ENCODE measurements at regions of chr10 and their contacts with region 1.

Region 1: DNA sequence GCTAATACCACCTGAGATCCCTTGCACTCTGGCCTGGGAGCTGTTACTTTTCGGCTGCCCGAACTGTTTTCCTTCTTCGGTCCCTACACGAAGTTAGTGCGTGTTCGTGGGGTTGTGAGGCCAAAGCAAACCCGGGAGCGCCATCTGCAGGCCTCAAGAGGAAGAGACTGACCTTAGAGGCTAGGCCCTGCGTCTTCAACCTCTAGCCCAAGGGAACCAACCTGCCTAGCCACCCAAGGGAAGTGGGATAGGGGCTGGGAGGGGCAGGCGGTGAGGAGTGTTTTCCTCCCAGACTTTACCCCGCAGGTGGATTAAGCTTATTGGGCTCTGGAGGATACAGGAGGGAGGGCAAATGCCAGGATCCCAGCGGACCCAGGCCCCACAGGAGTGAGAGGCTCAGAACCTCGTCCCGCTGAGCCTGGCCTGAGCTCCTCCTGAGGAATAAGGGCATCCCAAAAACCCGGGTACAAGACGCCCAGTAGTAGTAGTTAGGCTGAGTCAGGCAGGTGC is 1.7 kb upstream of the PAX2 start:
- DNase-seq: peak; percentile 57
- ATAC-seq: peak; percentile 3; the same call in 1 of the 2 replicates
- H3K4me3 Mint-ChIP-seq: peak overlapping the region; percentile 52
- H3K27ac Mint-ChIP-seq: no peak overlapping the region
- H3K4me1 Mint-ChIP-seq: peaks cover 65% of the 10 kb centered on the region
- H3K27me3 Mint-ChIP-seq: peaks cover 96% of the 10 kb centered on the region
- CTCF ChIP-seq: peak; percentile 58; the same call in 1 of the 2 replicates

Region 2: GRCh38 chr10:100637785-100638184 is 105.9 kb before region 1 on chr10:
- CTCF ChIA-PET with region 1: interaction called, 12 read pairs
- POLR2A ChIA-PET with region 1: no interaction called
- DNase-seq: peak; percentile 87
- ATAC-seq: peak; percentile 88
- H3K4me3 Mint-ChIP-seq: peak overlapping the region; percentile 29
- H3K27ac Mint-ChIP-seq: no peak overlapping the region
- H3K4me1 Mint-ChIP-seq: peaks cover 35% of the 10 kb centered on the region
- H3K27me3 Mint-ChIP-seq: peaks cover 14% of the 10 kb centered on the region
- CTCF ChIP-seq: peak; percentile 76

Region 3: GRCh38 chr10:100715445-100716385 is 28.0 kb before region 1 on chr10:
- CTCF ChIA-PET with region 1: interaction called, 12 read pairs
- POLR2A ChIA-PET with region 1: no interaction called
- DNase-seq: peak; percentile 46
- ATAC-seq: peak; percentile 70
- H3K4me3 Mint-ChIP-seq: peak overlapping the region; percentile 79
- H3K27ac Mint-ChIP-seq: no peak overlapping the region
- H3K4me1 Mint-ChIP-seq: peaks cover 16% of the 10 kb centered on the region
- H3K27me3 Mint-ChIP-seq: peaks cover 100% of the 10 kb centered on the region
- CTCF ChIP-seq: no peak

Region 4: GRCh38 chr10:100728928-100729861 is 14.5 kb before region 1 on chr10:
- CTCF ChIA-PET with region 1: interaction called, 22 read pairs
- POLR2A ChIA-PET with region 1: interaction called, 4 read pairs
- DNase-seq: peak; percentile 80
- ATAC-seq: peak; percentile 61
- H3K4me3 Mint-ChIP-seq: peak overlapping the region; percentile 53
- H3K27ac Mint-ChIP-seq: no peak overlapping the region
- H3K4me1 Mint-ChIP-seq: peaks cover 40% of the 10 kb centered on the region
- H3K27me3 Mint-ChIP-seq: peaks cover 100% of the 10 kb centered on the region
- CTCF ChIP-seq: peak; percentile 23; the same call in 1 of the 2 replicates

Region 5: GRCh38 chr10:100817268-100817839 is 73.7 kb after region 1 on chr10:
- CTCF ChIA-PET with region 1: interaction called, 19 read pairs
- POLR2A ChIA-PET with region 1: no interaction called
- DNase-seq: peak; percentile 72
- ATAC-seq: peak; percentile 97
- H3K4me3 Mint-ChIP-seq: no peak overlapping the region
- H3K27ac Mint-ChIP-seq: no peak overlapping the region
- H3K4me1 Mint-ChIP-seq: peaks cover 24% of the 10 kb centered on the region
- H3K27me3 Mint-ChIP-seq: peaks cover 32% of the 10 kb centered on the region
- CTCF ChIP-seq: 0 out of 2 replicates have a peak, but pooled peaks have one; percentile 18